ENCODE measurements at regions of chr3 and their contacts with region 1.

Region 1: GRCh38 chr3:20696388-20697150 is 510.6 kb upstream of the SGO1 start:
- DNase-seq: no peak

Region 2: DNA sequence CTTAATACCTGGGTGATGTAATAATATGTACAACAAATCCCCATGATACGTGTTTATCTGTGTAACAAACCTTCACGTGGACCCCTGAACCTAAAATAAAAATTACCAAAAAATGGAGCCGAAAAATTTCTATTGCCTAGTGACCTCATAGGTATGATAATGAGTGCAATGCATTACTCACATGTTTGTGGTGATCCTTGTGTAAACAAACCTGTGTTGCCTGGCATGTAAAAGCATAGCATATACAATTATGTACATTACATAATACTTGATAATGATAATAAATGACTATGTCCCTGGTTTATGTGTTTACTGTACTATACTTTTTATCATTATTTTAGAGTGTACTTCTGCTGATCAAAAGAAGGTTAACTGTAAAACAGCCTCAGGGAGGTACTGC is 89.0 kb after region 1 on chr3:
- intact Hi-C with region 1: loop called in 1 of 2 experiments (anchors 2 kb)
- DNase-seq: no peak